ENCODE measurements at regions of chr4 and their contacts with region 1.

Region 1: DNA sequence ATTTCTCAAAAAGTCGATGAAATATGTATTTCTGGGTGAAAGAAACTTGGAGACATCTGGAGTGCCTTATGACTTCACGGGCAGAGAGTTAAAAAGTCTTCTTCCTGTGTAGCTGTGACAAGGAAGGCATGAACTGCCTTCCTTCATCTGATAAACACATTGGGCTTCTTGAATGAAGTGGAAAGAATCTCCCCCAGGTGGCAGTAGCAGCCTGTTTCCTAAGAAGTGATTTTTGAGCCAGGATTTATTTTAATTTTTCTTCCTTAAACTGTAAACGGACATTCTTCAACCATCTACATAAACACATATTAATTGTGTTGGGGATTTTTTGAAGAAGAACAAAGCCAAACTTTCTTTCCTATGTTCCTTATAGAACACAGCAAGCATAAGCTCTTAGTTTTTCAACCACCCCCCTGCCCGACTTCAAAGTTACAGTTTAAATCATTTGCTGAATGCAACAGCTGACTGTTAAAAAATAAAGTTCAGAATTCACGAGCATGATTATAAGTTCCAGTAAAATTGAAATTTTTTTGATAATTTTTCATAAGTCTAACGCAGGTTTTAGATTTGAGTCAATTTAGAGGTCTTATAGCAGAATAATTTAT is 980 bp upstream of the GIMD1 start:
- DNase-seq: peak; percentile 79
- ATAC-seq: peak; percentile 93
- H3K4me3 ChIP-seq: no peak overlapping the region
- H3K27ac ChIP-seq: no peak overlapping the region
- H3K4me1 ChIP-seq: peaks cover 0 to 11% of the 10 kb centered on the region in 2 experiments; a peak in 2 of 4 replicates
- H3K27me3 ChIP-seq: no peaks in the 10 kb centered on the region
- CTCF ChIP-seq: peak; percentile 66 to 80 (median 77)
- POLR2A ChIP-seq: no peak
- RAD21 ChIP-seq: peak; percentile 86

Region 2: GRCh38 chr4:105840426-105841174 is 529.0 kb before region 1 on chr4:
- CTCF ChIA-PET with region 1: no interaction called
- POLR2A ChIA-PET with region 1: no interaction called
- RAD21 ChIA-PET with region 1: no interaction called
- intact Hi-C with region 1: no loop called
- DNase-seq: no peak
- ATAC-seq: no peak
- H3K4me3 ChIP-seq: no peak overlapping the region
- H3K27ac ChIP-seq: no peak overlapping the region
- H3K4me1 ChIP-seq: no peaks in the 10 kb centered on the region
- H3K27me3 ChIP-seq: no peaks in the 10 kb centered on the region
- CTCF ChIP-seq: no peak
- POLR2A ChIP-seq: no peak
- RAD21 ChIP-seq: no peak

Region 3: GRCh38 chr4:106395582-106395981 is 26.0 kb after region 1 on chr4:
- CTCF ChIA-PET with region 1: no interaction called
- POLR2A ChIA-PET with region 1: no interaction called
- RAD21 ChIA-PET with region 1: no interaction called
- intact Hi-C with region 1: loop called (anchors 1 kb)
- DNase-seq: no peak
- ATAC-seq: no peak
- H3K4me3 ChIP-seq: no peak overlapping the region
- H3K27ac ChIP-seq: no peak overlapping the region
- H3K4me1 ChIP-seq: no peaks in the 10 kb centered on the region
- H3K27me3 ChIP-seq: no peaks in the 10 kb centered on the region
- CTCF ChIP-seq: no peak
- POLR2A ChIP-seq: no peak
- RAD21 ChIP-seq: no peak

Region 4: GRCh38 chr4:106522839-106523238 is 153.3 kb after region 1 on chr4:
- CTCF ChIA-PET with region 1: interaction called, 10 read pairs
- POLR2A ChIA-PET with region 1: no interaction called
- RAD21 ChIA-PET with region 1: no interaction called
- intact Hi-C with region 1: no loop called
- DNase-seq: no peak
- ATAC-seq: peak; percentile 55; the same call in 1 of the 2 replicates
- H3K4me3 ChIP-seq: no peak overlapping the region
- H3K27ac ChIP-seq: no peak overlapping the region
- H3K4me1 ChIP-seq: no peaks in the 10 kb centered on the region
- H3K27me3 ChIP-seq: no peaks in the 10 kb centered on the region
- CTCF ChIP-seq: peak in 2 of 3 experiments; percentile 12 to 31; a peak in 3 of 6 replicates
- POLR2A ChIP-seq: no peak
- RAD21 ChIP-seq: peak; percentile 34; the same call in 1 of the 2 replicates

Region 5: GRCh38 chr4:106818764-106819163 is 449.2 kb after region 1 on chr4:
- CTCF ChIA-PET with region 1: interaction called, 21 read pairs
- POLR2A ChIA-PET with region 1: no interaction called
- RAD21 ChIA-PET with region 1: no interaction called
- intact Hi-C with region 1: no loop called
- DNase-seq: no peak
- ATAC-seq: no peak
- H3K4me3 ChIP-seq: no peak overlapping the region
- H3K27ac ChIP-seq: no peak overlapping the region
- H3K4me1 ChIP-seq: no peaks in the 10 kb centered on the region
- H3K27me3 ChIP-seq: no peaks in the 10 kb centered on the region
- CTCF ChIP-seq: peak in 2 of 3 experiments; percentile 18 to 43; a peak in 3 of 6 replicates
- POLR2A ChIP-seq: no peak
- RAD21 ChIP-seq: peak; percentile 36; the same call in 1 of the 2 replicates

Region 6: GRCh38 chr4:107183155-107183774 is 813.7 kb after region 1 on chr4:
- CTCF ChIA-PET with region 1: no interaction called
- POLR2A ChIA-PET with region 1: no interaction called
- RAD21 ChIA-PET with region 1: no interaction called
- intact Hi-C with region 1: loop called (anchors 2 kb)
- DNase-seq: peak; percentile 55
- ATAC-seq: peak; percentile 100
- H3K4me3 ChIP-seq: no peak overlapping the region
- H3K27ac ChIP-seq: no peak overlapping the region
- H3K4me1 ChIP-seq: 0 out of 4 replicates have a peak, but pooled peaks cover 0 to 2% of the 10 kb centered on the region in 2 experiments
- H3K27me3 ChIP-seq: no peaks in the 10 kb centered on the region
- CTCF ChIP-seq: peak; percentile 66 to 78 (median 75); a peak in 5 of 6 replicates
- POLR2A ChIP-seq: no peak
- RAD21 ChIP-seq: peak; percentile 77

Measured in HCT116 (cell line).